Testis (tissue), 5 donors: ENCODE measurements at regions of chr12 and their contacts with region 1.

Region 1: GRCh38 chr12:6723607-6724396 is at the start of gene COPS7A:
- DNase-seq: peak; percentile 99
- H3K4me3 ChIP-seq: peak within 1 kb of the TSS; percentile 57 to 78
- H3K27ac ChIP-seq: peak within 1 kb of the TSS; percentile 78 to 81
- H3K4me1 ChIP-seq: peaks cover 5% of the 10 kb centered on the region
- H3K27me3 ChIP-seq: no peaks in the 10 kb centered on the region
- CTCF ChIP-seq: peak in 1 of 3 experiments; percentile 11
- POLR2A ChIP-seq: no peak
- total RNA-seq, gene COPS7A: 68.3 to 82.4 TPM

Region 2: DNA sequence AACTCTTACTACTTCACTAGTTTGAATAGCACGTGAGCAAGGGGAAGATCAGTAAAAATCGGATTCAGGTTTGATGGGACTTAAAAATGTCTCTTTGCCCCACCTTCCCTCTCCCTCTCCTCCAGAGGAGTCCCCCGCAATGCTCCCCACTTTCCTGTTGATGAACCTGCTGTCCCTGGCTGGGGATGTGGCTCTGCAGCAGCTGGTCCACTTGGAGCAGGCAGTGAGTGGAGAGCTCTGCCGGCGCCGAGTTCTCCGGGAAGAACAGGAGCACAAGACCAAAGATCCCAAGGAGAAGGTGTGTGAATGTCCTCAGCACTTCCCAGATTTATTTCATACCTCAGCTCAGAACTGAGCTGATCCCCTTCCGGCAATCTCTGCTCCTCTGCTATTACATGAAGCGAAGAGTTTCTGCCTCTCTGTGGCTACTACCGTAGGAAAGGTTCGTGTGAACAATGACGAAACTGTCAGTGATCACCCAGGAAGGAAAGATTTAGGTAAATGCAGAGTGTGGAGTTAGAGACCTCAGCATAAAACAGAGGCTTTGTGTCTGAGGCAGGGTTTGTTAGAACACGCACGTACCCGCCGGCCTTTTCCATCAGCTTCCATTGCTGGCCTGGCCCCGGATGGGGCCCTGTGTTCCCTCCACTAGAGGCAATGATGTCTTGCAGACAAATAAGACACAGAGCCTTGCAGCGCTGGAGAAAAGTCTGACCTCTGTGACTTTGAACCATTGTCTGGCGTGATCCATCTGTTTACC is 196.9 kb before region 1 on chr12:
- intact Hi-C with region 1: no loop called
- DNase-seq: no peak
- H3K4me3 ChIP-seq: no peak overlapping the region
- H3K27ac ChIP-seq: no peak overlapping the region
- H3K4me1 ChIP-seq: peaks cover 3% of the 10 kb centered on the region
- H3K27me3 ChIP-seq: no peaks in the 10 kb centered on the region
- CTCF ChIP-seq: no peak
- POLR2A ChIP-seq: no peak

Region 3: GRCh38 chr12:6582196-6582595 is 141.6 kb before region 1 on chr12:
- intact Hi-C with region 1: no loop called
- DNase-seq: no peak
- H3K4me3 ChIP-seq: no peak overlapping the region
- H3K27ac ChIP-seq: no peak overlapping the region
- H3K4me1 ChIP-seq: no peaks in the 10 kb centered on the region
- H3K27me3 ChIP-seq: no peaks in the 10 kb centered on the region
- CTCF ChIP-seq: no peak
- POLR2A ChIP-seq: no peak

Region 4: GRCh38 chr12:6688999-6689882 is 34.6 kb before region 1 on chr12 and contains the start of gene ZNF384:
- intact Hi-C with region 1: loop called (anchors 5 kb)
- DNase-seq: peak; percentile 99
- H3K4me3 ChIP-seq: peak within 1 kb of the TSS; percentile 86 to 94
- H3K27ac ChIP-seq: peak within 1 kb of the TSS; percentile 95 to 96
- H3K4me1 ChIP-seq: peaks cover 29% of the 10 kb centered on the region
- H3K27me3 ChIP-seq: no peaks in the 10 kb centered on the region
- CTCF ChIP-seq: peak in 2 of 3 experiments; percentile 34 to 63
- POLR2A ChIP-seq: no peak
- total RNA-seq, gene ZNF384: 78.5 to 85.1 TPM